OCI-LY7 (cell line): ENCODE measurements at regions of chr6 and their contacts with region 1.

Region 1: GRCh38 chr6:70955441-70956190 is 1.2 kb downstream of the B3GAT2 start:
- DNase-seq: peak; percentile 59
- H3K4me3 ChIP-seq: no peak overlapping the region
- H3K27ac ChIP-seq: no peak overlapping the region
- H3K4me1 ChIP-seq: no peaks in the 10 kb centered on the region
- CTCF ChIP-seq: peak; percentile 76

Region 2: DNA sequence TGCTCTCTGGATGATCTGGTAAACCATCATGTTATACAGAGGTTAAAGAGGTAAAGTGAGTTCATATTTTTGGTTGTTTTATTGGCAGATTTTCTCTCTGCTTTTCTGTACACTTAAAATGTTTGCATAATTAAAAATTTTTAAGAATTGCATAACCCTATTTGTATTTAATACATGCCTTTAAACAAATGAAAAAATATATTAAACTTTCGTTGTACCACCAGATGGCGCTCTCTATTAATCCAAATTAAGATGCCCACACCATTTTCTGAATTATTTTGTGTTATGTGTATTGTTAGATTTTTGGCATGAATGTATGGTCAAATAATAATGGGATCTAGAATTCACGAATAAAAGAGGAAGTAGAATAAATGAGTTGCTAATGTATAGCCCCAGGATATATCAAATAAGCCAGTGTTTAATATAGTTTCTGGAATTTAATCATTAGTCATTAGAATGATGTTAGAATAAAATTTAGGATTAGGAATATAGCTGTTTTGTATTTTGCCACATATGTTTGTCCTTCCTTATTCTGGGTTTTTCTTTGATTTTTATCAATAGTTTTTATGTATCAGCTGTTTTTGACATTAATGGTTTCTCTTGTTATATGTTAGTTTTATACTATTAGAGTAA is 249.0 kb before region 1 on chr6:
- CTCF ChIA-PET with region 1: no interaction called
- POLR2A ChIA-PET with region 1: no interaction called
- intact Hi-C with region 1: loop called (anchors 2 kb)
- DNase-seq: peak; percentile 62
- H3K4me3 ChIP-seq: no peak overlapping the region
- H3K27ac ChIP-seq: no peak overlapping the region
- H3K4me1 ChIP-seq: no peaks in the 10 kb centered on the region
- CTCF ChIP-seq: peak; percentile 96